ENCODE measurements at regions of chr12 and their contacts with region 1.

Region 1: DNA sequence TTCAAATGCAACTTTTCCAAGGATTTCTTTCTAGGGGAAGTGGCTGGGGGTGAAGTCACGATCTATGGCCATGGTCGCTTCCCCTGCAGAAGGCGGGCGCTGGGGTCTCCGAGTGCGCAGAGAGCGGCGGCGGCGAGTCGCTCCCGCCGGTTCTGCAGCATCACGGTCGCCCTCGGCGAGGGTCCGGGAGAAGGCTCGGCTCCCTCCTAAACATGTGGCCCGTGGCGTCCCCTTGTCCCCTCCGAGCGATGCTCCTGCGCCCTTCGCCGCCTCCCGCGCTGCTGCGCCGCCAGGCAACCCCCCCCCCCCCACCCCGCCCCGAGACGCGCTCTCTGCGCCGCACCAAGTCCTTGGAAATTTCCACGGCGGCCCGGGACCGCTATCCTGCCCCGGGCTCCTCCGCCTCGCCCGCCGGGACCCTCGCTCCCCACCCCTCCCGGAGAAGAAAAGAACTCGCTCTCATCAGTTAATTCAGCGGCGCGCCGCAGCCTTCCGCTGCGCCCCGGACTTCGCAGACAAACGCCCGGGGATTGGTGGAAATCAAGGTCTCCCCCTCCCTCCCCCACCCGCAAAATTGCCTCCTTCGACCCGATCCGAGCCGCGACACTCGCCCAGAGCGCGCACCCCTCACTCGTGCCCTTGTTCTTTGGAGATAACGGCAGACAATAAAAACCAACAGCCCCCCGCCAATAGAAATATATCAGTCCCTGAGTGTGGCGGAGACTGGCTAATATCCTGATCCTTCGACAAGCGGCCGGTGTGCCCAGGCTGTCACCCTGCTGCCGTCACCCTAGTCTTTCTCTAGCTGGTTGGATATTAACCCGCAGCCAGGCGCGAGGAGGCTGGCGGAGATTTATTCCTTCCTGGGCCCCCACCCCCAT is at the start of gene ST8SIA1:
- DNase-seq: peak; percentile 33
- H3K4me3 Mint-ChIP-seq: peak within 1 kb of the TSS; percentile 94
- H3K27ac Mint-ChIP-seq: peak within 1 kb of the TSS; percentile 79
- H3K4me1 Mint-ChIP-seq: peaks cover 23% of the 10 kb centered on the region
- H3K27me3 Mint-ChIP-seq: no peaks in the 10 kb centered on the region
- CTCF ChIP-seq: no peak
- total RNA-seq, gene ST8SIA1: 3.8 and 4.7 TPM in 2 replicates

Region 2: DNA sequence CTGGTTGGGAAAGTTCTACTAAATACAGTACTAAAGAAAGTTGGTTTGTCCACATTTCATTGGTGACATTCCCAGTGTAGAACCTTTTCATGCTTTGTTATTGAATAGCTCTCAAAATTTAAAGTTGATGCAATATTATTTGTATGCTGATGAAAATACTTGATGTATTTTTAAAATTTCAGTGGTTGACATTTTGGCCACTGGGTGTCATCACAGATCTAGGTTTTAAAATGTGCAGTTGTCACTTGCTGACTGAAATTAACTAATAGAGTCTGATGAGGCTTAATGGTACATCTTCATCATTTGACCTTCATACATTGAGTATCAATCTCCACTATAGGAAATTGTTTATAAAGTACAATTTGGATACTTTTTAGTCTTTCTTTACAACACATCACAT is 251.5 kb before region 1 on chr12:
- CTCF ChIA-PET with region 1: interaction called, 39 read pairs
- POLR2A ChIA-PET with region 1: interaction called, 6 read pairs
- intact Hi-C with region 1: loop called (anchors 1 kb)
- DNase-seq: peak; percentile 47
- H3K4me3 Mint-ChIP-seq: no peak overlapping the region
- H3K27ac Mint-ChIP-seq: no peak overlapping the region
- H3K4me1 Mint-ChIP-seq: no peaks in the 10 kb centered on the region
- H3K27me3 Mint-ChIP-seq: no peaks in the 10 kb centered on the region
- CTCF ChIP-seq: peak; percentile 58

Region 3: GRCh38 chr12:22100958-22101748 is 233.5 kb before region 1 on chr12:
- CTCF ChIA-PET with region 1: interaction called, 62 read pairs
- POLR2A ChIA-PET with region 1: interaction called, 7 read pairs
- intact Hi-C with region 1: loop called (anchors 1 kb)
- DNase-seq: peak; percentile 82
- H3K4me3 Mint-ChIP-seq: no peak overlapping the region
- H3K27ac Mint-ChIP-seq: peak overlapping the region; percentile 81
- H3K4me1 Mint-ChIP-seq: peaks cover 19% of the 10 kb centered on the region
- H3K27me3 Mint-ChIP-seq: no peaks in the 10 kb centered on the region
- CTCF ChIP-seq: peak; percentile 58

Region 4: DNA sequence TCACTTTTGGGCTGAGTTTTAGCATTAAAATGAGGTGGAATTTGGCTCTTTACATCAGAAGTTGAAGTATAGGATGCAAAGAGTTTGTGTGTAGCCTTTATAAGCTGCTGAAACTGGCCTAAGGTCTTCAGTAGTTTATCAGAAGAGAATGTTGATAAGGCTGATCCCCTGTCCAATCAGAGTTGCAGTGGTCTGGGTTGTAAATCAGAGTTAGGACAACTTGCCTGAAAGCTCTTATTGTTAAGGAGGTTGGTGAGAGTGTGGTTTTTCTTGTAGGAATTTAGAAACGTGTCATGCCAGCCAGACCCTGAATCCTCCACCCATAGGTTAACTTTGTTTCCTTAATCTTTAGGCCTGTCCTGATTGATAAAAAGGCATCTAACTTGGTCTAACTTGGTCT is 143.7 kb before region 1 on chr12:
- CTCF ChIA-PET with region 1: interaction called, 12 read pairs
- POLR2A ChIA-PET with region 1: no interaction called
- intact Hi-C with region 1: loop called (anchors 1 kb)
- DNase-seq: no peak
- H3K4me3 Mint-ChIP-seq: no peak overlapping the region
- H3K27ac Mint-ChIP-seq: no peak overlapping the region
- H3K4me1 Mint-ChIP-seq: no peaks in the 10 kb centered on the region
- H3K27me3 Mint-ChIP-seq: no peaks in the 10 kb centered on the region
- CTCF ChIP-seq: no peak

Region 5: DNA sequence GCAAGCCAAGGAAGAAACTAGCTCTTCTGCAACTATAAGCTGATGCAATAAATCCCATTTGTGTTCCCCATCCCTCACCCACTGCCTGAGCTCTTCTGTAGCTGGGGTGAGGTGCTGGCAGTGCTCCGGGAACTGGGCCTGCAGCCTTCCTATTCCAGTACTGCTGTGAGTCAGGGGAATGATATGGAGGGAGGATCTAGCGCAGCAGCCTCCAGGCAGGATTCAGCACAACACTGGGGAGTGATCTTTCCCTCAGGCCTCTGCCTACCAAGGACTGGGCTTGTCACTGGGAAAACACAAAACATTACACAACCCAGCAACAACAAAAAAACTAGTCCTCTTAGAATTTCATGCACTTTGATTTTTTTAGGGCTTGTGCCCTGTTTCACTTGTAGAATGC is 58.8 kb before region 1 on chr12:
- CTCF ChIA-PET with region 1: interaction called, 18 read pairs
- POLR2A ChIA-PET with region 1: interaction called, 7 read pairs
- intact Hi-C with region 1: loop called (anchors 1 kb)
- DNase-seq: peak; percentile 99
- H3K4me3 Mint-ChIP-seq: peak overlapping the region; percentile 53
- H3K27ac Mint-ChIP-seq: peak overlapping the region; percentile 96
- H3K4me1 Mint-ChIP-seq: peaks cover 51% of the 10 kb centered on the region
- H3K27me3 Mint-ChIP-seq: no peaks in the 10 kb centered on the region
- CTCF ChIP-seq: no peak

Region 6: GRCh38 chr12:22437031-22437780 is 102.6 kb after region 1 on chr12:
- CTCF ChIA-PET with region 1: interaction called, 10 read pairs
- POLR2A ChIA-PET with region 1: interaction called, 3 read pairs
- intact Hi-C with region 1: no loop called
- DNase-seq: peak; percentile 55
- H3K4me3 Mint-ChIP-seq: peak overlapping the region; percentile 64
- H3K27ac Mint-ChIP-seq: peak overlapping the region; percentile 61
- H3K4me1 Mint-ChIP-seq: peaks cover 18% of the 10 kb centered on the region
- H3K27me3 Mint-ChIP-seq: peaks cover 20% of the 10 kb centered on the region
- CTCF ChIP-seq: no peak

Measured in MCF 10A (cell line).